Right ventricle myocardium superior (tissue), 1 donor: ENCODE measurements at regions of chr6 and their contacts with region 1.

Region 1: DNA sequence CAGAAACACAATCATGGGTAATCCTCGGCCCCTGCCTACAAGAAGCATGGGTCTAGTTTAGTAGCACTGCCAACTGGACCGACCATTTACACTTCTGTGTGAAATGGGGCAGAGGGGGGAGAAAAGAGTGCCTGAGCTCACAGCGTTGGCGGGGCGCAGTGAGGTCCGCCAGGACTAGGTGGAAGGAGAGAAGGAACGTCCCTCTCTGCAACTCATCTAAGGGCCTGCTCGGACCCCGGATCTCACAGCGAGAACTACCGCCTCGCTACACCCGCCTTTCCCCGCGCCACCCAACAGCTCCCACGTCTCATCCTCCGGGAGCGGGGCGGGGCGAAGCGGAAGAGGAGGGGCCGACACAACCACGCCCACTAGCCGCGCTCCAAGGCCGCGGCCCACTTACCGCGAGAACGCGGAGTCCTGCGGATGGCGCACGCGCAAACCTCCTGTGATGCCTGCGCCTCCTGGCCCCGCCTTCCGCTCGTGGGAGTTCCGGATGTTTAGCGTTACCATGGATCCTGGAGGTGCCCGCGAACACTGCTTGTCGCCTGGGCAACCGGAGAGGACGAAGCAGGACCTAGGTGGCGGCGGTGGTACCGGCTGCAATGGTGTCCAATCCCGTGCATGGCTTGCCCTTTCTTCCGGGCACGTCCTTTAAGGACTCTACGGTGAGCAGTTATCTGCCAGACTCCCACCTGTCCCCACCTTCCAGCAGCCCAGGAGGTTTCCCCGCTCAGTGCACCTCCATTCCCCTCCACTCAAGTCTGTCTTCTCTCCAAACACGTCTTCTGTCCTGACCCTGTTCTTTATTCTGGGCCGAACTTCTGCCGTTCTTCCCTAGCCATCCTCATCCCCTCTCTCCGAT is at the start of gene EFHC1:
- DNase-seq: peak; percentile 99
- ATAC-seq: peak; percentile 98
- total RNA-seq, gene EFHC1: 6.4 TPM

Region 2: DNA sequence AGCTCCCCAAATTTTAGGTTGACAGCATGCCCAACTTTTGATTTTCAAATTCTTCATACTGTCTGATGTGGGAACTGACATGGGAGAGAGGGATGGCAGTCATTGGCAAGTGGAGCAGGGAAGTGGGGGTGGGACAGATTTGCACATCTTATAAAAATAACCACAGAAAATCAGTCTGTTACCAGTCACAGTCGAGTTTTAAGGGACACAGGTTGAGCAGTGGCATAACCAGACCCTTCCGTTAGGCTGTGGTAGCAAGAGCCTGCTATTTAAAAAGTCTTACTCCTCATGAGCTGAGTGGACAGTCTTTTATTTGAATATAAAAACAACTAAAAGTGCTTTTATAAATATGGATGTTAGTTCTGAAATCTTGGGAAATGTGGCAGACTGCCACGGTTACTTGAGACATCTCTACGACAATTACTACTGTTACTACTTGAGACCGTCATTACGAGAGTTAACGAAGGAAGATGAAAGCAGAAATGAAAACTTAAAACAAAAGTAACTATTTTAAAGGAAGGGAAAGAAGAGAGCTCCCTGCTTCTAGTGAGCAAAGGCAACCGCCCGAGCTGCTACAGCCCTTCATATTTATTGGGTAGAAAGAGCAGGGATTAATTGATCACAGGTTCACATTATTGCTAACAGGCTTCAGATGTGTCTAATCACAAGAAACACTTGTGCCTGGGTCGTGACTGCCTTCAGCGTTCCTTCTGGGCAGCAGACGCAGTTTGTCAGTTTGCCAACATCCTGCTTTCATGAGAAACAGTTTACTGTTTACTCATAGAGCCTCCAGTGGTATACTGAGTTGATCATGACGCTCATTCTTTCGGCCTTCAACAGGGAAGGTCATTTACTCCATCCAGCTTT is 71.4 kb after region 1 on chr6:
- intact Hi-C with region 1: loop called (anchors 5 kb)
- DNase-seq: no peak
- ATAC-seq: no peak

Region 3: DNA sequence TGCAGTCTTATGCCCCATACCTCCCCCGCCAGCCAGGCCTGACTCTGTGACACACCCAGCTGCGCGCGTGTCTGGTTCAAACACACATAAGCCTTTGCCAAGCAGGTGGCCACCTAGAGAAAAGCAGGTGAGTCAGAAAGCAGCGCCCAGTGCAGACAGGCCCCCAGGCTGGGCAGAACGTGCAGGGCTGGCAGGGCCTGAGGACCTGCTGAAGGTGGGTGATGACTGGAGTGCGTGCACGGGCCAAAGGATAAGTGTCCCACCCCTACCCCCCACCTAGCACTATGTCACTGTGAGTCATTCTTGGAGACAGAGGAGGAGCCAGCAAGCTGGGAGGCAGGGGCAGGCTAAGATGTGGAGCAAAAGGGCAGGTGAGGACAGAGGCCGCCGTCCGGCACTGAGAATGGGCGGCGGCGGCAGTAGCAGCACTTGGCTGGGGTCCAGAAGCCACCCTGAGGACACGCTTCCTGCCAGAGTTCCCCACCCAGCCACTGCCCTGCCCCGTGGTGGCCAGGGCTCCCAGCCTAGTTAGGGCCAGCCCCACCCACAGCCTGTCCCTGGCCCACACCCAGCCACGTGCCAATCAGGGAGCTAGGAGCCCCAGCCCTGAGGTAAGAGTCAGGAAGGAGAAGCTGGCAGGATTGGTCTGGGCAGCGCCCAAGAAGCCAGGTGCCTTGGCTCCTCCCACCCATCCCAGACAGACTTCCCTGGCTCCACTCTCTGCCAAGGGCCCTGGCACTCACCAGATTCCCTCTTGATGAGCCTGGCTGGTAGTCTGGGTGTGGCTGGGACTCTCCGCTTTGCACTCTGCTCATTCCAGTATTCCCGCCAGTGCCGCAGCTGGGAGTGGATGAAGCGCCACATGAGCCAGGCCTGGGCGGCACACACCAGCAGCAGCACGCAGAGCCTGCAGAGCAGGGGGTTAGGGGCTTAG is 84.1 kb after region 1 on chr6:
- intact Hi-C with region 1: loop called (anchors 5 kb)
- DNase-seq: peak; percentile 94
- ATAC-seq: peak; percentile 86

Region 4: DNA sequence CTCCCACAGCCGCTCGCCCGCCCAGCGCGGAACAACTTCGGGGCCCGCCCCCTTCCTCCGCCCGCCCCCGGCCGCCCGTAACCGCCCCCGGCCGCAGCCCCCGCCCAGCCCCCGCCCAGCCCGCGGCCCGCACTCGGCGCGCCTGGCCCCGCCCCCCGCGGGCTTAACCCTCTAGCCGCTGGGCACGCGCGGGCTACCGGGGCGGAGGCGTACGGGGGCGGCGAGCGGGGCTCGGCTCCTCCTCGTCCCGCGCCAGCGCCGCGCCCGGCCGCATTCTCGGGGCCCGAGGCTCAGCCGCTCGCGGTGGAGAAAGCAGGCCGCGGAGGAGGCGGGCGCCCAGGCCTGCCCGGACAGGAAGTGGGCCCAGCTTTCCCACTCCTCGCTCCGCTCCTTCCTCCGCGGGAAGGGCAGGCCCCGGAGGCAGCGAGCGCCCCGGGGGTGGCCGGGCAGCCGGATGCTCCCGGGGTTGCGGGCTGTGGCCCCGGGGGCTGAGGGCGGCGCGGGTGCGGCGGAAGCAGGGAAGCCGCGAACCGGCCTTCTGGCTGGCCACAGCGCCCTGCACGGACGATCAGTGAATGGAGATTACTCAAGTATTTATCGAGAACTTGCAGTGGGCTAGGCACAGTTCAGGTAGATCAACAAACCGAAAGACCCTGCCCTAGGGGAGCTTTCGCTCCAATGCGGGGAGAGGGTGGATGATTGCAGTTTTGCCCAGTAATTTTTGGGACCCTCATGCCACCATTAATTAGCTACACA is 157.2 kb after region 1 on chr6 and contains the start of gene TRAM2:
- intact Hi-C with region 1: loop called (anchors 1 kb)
- DNase-seq: peak; percentile 93
- ATAC-seq: peak; percentile 91
- total RNA-seq, gene TRAM2: 11.0 TPM

Region 5: GRCh38 chr6:52595000-52595795 is 175.2 kb after region 1 on chr6:
- intact Hi-C with region 1: loop called (anchors 5 kb)
- DNase-seq: peak; percentile 70
- ATAC-seq: peak; percentile 74

Region 6: DNA sequence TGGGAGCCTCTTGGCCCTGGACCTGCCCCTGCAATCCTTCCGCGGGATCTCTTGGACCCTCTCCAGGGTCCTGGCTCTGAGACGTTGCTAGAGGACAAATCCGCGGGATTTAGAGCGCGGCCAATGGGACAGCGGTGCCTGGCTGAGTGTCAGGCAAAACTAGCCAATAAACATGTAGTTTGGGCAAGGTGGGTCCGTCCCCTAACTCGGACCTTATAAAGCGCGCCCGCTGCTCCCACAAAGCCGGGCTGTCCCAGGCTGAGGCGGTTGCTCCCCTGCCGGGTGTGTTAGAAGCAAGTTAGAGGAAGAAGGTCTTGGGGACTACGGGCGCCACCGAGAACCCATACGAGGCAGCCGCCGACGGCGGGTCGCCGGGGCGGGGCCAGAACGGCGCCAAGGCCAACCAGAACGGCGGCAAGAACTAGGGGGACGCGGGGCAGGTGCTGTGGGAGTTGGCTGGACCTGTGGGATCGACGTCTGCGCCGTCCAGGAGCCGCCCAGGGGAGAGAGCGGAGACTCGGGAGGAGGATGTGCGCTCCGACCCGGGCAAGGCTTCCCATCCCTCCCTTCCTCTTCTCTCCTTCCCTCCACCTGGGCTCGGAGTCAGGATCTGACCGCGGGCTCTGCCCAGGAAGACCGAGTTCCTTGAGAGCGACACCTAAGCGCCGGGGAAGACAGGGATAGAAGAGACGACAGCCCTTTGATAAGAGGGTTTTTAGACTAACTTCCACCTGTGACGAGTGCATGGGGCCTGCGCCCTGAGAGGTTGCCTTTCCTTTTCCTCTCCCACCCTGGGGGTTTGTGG is 244.3 kb after region 1 on chr6:
- intact Hi-C with region 1: loop called (anchors 1 kb)
- DNase-seq: peak; percentile 91
- ATAC-seq: peak; percentile 99